B cell (primary cell): ENCODE measurements at regions of chr17 and their contacts with region 1.

Region 1: DNA sequence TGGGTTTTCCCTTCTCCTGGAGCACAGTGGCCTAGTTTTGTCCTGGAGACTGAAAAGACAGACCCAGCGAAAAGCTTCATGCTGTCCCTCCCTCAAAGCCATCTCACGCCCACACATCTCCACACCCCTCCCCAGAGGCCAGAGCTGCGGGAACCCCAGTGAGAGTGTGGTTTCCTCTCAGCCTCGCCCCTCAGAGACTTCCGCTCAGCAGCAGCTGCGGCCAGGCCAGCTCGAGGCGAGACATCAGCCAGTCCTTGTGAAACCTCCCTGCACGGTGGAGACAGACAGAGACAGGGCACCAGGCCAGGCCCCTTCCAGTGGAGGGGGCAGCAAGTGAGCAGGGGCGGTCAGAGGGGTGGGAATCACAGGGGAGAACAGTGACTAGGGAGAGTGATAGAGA is 77.0 kb upstream of the TNRC6C start:
- DNase-seq: peak; percentile 91
- ATAC-seq: peak; percentile 85
- H3K4me3 ChIP-seq: peak overlapping the region in 4 of 5 experiments; percentile 25 to 46 (median 38)
- H3K4me3 Mint-ChIP-seq: peak overlapping the region; percentile 89
- H3K27ac ChIP-seq: peak overlapping the region; percentile 49 to 72
- H3K27ac Mint-ChIP-seq: peak overlapping the region; percentile 88
- H3K4me1 ChIP-seq: peaks cover 74 to 80% of the 10 kb centered on the region in 2 donors
- H3K4me1 Mint-ChIP-seq: peaks cover 71% of the 10 kb centered on the region
- H3K27me3 ChIP-seq: peaks cover 0 to 11% (median 0%) of the 10 kb centered on the region in 4 experiments
- H3K27me3 Mint-ChIP-seq: no peaks in the 10 kb centered on the region
- CTCF ChIP-seq: no peak

Region 2: GRCh38 chr17:77325577-77326075 is 555.9 kb before region 1 on chr17:
- CTCF ChIA-PET with region 1: interaction called, 3 read pairs
- POLR2A ChIA-PET with region 1: no interaction called
- intact Hi-C with region 1: loop called (anchors 5 kb)
- DNase-seq: no peak
- ATAC-seq: peak; percentile 10
- H3K4me3 ChIP-seq: no peak overlapping the region
- H3K4me3 Mint-ChIP-seq: peak overlapping the region; percentile 93
- H3K27ac ChIP-seq: peak overlapping the region; percentile 82 to 87
- H3K27ac Mint-ChIP-seq: peak overlapping the region; percentile 90
- H3K4me1 ChIP-seq: peaks cover 72 to 94% of the 10 kb centered on the region in 2 donors
- H3K4me1 Mint-ChIP-seq: peaks cover 82% of the 10 kb centered on the region
- H3K27me3 ChIP-seq: no peaks in the 10 kb centered on the region
- H3K27me3 Mint-ChIP-seq: no peaks in the 10 kb centered on the region
- CTCF ChIP-seq: no peak

Region 3: GRCh38 chr17:77772461-77772897 is 109.1 kb before region 1 on chr17:
- CTCF ChIA-PET with region 1: interaction called, 3 read pairs
- POLR2A ChIA-PET with region 1: no interaction called
- intact Hi-C with region 1: loop called (anchors 5 kb)
- DNase-seq: peak; percentile 79
- ATAC-seq: peak; percentile 91
- H3K4me3 ChIP-seq: no peak overlapping the region
- H3K4me3 Mint-ChIP-seq: no peak overlapping the region
- H3K27ac ChIP-seq: no peak overlapping the region
- H3K27ac Mint-ChIP-seq: no peak overlapping the region
- H3K4me1 ChIP-seq: peaks cover 0 to 11% of the 10 kb centered on the region in 2 donors
- H3K4me1 Mint-ChIP-seq: peaks cover 13% of the 10 kb centered on the region
- H3K27me3 ChIP-seq: peaks cover 0 to 4% (median 2%) of the 10 kb centered on the region in 4 experiments
- H3K27me3 Mint-ChIP-seq: peaks cover 8% of the 10 kb centered on the region
- CTCF ChIP-seq: peak; percentile 92

Region 4: DNA sequence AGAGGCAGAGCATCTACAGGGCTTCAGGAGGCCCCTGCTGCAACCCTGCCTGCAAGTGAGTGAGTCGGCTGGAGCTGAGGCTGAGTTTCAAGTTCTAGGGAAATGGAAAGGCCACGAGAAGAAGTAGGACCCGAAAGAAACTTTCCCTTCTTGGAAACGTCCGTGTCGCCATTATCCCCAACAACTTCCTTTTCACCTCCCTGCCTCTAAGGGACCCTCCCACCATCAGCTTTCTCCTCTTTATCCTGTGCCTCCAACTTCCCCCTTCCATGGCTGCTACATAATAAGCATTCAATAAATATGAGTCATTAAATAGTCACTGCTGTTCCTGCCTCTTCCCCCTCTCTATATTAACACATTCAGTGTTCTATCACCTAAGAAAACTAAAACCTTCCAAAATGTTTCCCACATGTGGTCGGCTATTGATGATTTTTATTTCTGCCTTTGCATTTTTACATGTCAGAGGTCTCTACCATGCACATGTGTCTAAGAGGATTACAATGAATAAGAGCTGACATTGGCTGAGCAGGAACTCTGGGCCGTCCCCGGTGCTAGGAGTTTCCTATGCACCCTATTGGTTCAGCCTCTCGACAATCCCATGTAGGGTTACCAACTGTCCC is 38.9 kb before region 1 on chr17:
- CTCF ChIA-PET with region 1: no interaction called
- POLR2A ChIA-PET with region 1: interaction called, 3 read pairs
- intact Hi-C with region 1: loop called (anchors 1 kb)
- DNase-seq: no peak
- ATAC-seq: no peak
- H3K4me3 ChIP-seq: no peak overlapping the region
- H3K4me3 Mint-ChIP-seq: no peak overlapping the region
- H3K27ac ChIP-seq: no peak overlapping the region
- H3K27ac Mint-ChIP-seq: no peak overlapping the region
- H3K4me1 ChIP-seq: peaks cover 43 to 62% of the 10 kb centered on the region in 2 donors
- H3K4me1 Mint-ChIP-seq: peaks cover 45% of the 10 kb centered on the region
- H3K27me3 ChIP-seq: peaks cover 0 to 71% (median 25%) of the 10 kb centered on the region in 4 experiments
- H3K27me3 Mint-ChIP-seq: peaks cover 50% of the 10 kb centered on the region
- CTCF ChIP-seq: no peak

Region 5: GRCh38 chr17:77869665-77870132 is 11.8 kb before region 1 on chr17:
- CTCF ChIA-PET with region 1: interaction called, 18 read pairs
- POLR2A ChIA-PET with region 1: interaction called, 38 read pairs
- intact Hi-C with region 1: loop called (anchors 1 kb)
- DNase-seq: peak; percentile 97
- ATAC-seq: peak; percentile 94
- H3K4me3 ChIP-seq: peak overlapping the region; percentile 20 to 38 (median 27)
- H3K4me3 Mint-ChIP-seq: peak overlapping the region; percentile 69
- H3K27ac ChIP-seq: peak overlapping the region; percentile 52 to 77
- H3K27ac Mint-ChIP-seq: peak overlapping the region; percentile 83
- H3K4me1 ChIP-seq: peaks cover 48 to 63% of the 10 kb centered on the region in 2 donors
- H3K4me1 Mint-ChIP-seq: peaks cover 66% of the 10 kb centered on the region
- H3K27me3 ChIP-seq: peaks cover 0 to 11% (median 4%) of the 10 kb centered on the region in 4 experiments
- H3K27me3 Mint-ChIP-seq: peaks cover 13% of the 10 kb centered on the region
- CTCF ChIP-seq: no peak

Region 6: DNA sequence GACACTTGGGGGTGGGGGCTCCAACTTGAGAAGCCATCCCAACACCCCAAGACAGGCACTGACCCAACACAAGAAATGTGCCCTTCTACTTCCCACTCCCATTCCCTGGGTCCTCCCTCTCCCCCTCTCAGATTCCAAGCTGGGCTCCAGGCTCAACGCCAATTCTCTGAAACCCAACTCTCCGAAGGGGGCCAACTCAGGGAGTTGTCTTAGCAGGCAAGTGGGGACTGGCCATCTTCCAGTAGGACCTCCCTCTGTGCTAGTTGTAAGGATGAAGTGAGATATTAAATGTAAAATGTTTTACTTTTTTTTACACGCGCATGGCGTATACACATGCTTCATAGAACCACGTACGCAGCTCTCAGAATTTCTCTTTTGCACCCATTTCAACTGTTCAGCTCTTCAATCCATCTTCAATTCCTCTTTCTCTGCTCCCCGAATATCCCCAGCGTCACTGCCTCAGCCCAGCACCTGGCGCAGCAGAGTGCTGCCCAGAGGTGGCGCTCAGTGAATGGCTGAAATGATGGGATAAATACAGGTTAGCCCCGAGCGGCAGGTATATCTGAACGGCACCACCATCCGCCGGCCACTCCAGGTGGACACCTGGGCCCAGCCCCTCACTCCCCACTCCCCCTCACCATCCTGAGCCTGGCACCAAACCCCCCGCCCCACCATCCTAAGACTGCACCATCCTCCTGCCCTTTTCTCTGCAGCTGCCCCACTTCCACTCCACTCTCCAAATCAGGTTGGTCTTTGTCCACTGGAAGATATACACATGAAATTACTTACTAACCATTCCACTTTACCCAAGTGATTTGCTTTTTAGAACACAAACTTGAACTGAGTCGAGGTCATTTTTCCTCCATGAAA is 33.1 kb after region 1 on chr17:
- CTCF ChIA-PET with region 1: interaction called, 6 read pairs
- POLR2A ChIA-PET with region 1: interaction called, 7 read pairs
- intact Hi-C with region 1: loop called (anchors 1 kb)
- DNase-seq: peak; percentile 56
- ATAC-seq: no peak
- H3K4me3 ChIP-seq: no peak overlapping the region
- H3K4me3 Mint-ChIP-seq: no peak overlapping the region
- H3K27ac ChIP-seq: no peak overlapping the region
- H3K27ac Mint-ChIP-seq: no peak overlapping the region
- H3K4me1 ChIP-seq: peaks cover 18 to 28% of the 10 kb centered on the region in 2 donors
- H3K4me1 Mint-ChIP-seq: peaks cover 24% of the 10 kb centered on the region
- H3K27me3 ChIP-seq: peaks cover 0 to 51% (median 28%) of the 10 kb centered on the region in 4 experiments
- H3K27me3 Mint-ChIP-seq: peaks cover 66% of the 10 kb centered on the region
- CTCF ChIP-seq: no peak

Region 7: DNA sequence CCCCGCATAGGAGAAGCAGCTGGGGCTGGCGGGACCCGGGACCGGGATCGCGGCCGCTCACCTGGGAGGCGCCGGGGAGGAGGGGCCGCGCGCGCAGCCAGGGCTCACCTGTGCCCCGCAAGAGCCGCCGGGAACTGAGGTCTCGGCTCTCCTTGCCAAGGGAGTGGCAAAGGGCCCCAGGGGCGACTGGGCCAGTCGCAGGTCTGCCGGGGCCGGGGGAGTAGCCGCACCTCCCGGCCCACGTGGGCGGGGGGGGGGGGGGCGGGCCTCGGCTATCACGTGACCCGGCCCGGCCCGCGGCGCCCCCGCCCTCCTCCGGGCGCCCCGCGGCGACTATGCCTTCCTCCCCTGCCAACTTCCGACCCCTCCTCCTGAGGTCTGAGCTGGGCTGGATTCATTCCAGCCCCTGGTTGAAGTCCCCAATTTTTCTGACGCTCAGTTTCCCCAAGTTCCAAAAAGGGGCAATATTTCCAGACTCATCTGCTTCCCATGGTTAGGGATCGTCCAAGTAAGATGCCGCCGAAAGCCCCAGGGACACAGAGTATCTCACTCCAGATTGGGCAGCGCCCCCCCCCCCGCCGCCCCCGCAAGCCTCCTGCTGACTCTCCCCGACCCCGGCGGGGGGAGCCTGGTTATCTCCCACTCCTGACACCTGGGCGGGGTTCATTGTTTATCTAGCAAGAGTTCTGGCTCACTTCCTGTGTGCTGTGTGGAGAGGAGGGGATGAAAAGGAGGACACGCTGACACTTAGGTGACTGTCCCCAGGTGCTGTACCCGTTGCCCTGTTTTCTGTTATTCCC is 247.2 kb after region 1 on chr17 and contains the start of gene TMC6:
- CTCF ChIA-PET with region 1: no interaction called
- POLR2A ChIA-PET with region 1: no interaction called
- intact Hi-C with region 1: no loop called
- DNase-seq: peak; percentile 88
- ATAC-seq: peak; percentile 21
- H3K4me3 ChIP-seq: peak within 1 kb of the TSS; percentile 38 to 97 (median 89)
- H3K4me3 Mint-ChIP-seq: peak within 1 kb of the TSS; percentile 96
- H3K27ac ChIP-seq: peak within 1 kb of the TSS; percentile 88 to 92
- H3K27ac Mint-ChIP-seq: peak within 1 kb of the TSS; percentile 99
- H3K4me1 ChIP-seq: peaks cover 68 to 80% of the 10 kb centered on the region in 2 donors
- H3K4me1 Mint-ChIP-seq: peaks cover 73% of the 10 kb centered on the region
- H3K27me3 ChIP-seq: no peaks in the 10 kb centered on the region
- H3K27me3 Mint-ChIP-seq: no peaks in the 10 kb centered on the region
- CTCF ChIP-seq: no peak
- total RNA-seq, gene TMC6: 891 and 910 TPM in 2 replicates